OCI-LY7 (cell line): ENCODE measurements at regions of chr7 and their contacts with region 1.

Region 1: GRCh38 chr7:47581806-47582763 is at the start of gene TNS3:
- DNase-seq: peak; percentile 71
- H3K4me3 ChIP-seq: peak within 1 kb of the TSS; percentile 87
- H3K27ac ChIP-seq: peak within 1 kb of the TSS; percentile 16
- H3K4me1 ChIP-seq: peaks cover 61% of the 10 kb centered on the region
- CTCF ChIP-seq: peak; percentile 41; the same call in 1 of the 2 replicates
- total RNA-seq, gene TNS3: 8.3 and 9.5 TPM in 2 replicates

Region 2: GRCh38 chr7:47153076-47153475 is 429.0 kb before region 1 on chr7:
- CTCF ChIA-PET with region 1: no interaction called
- POLR2A ChIA-PET with region 1: no interaction called
- intact Hi-C with region 1: loop called (anchors 5 kb)
- DNase-seq: peak; percentile 69
- H3K4me3 ChIP-seq: peak overlapping the region; percentile 63
- H3K27ac ChIP-seq: peak overlapping the region; percentile 98
- H3K4me1 ChIP-seq: peaks cover 91% of the 10 kb centered on the region
- CTCF ChIP-seq: no peak

Region 3: GRCh38 chr7:47266131-47266706 is 315.9 kb before region 1 on chr7:
- CTCF ChIA-PET with region 1: no interaction called
- POLR2A ChIA-PET with region 1: no interaction called
- intact Hi-C with region 1: loop called (anchors 5 kb)
- DNase-seq: peak; percentile 67
- H3K4me3 ChIP-seq: no peak overlapping the region
- H3K27ac ChIP-seq: no peak overlapping the region
- H3K4me1 ChIP-seq: no peaks in the 10 kb centered on the region
- CTCF ChIP-seq: peak; percentile 98

Region 4: DNA sequence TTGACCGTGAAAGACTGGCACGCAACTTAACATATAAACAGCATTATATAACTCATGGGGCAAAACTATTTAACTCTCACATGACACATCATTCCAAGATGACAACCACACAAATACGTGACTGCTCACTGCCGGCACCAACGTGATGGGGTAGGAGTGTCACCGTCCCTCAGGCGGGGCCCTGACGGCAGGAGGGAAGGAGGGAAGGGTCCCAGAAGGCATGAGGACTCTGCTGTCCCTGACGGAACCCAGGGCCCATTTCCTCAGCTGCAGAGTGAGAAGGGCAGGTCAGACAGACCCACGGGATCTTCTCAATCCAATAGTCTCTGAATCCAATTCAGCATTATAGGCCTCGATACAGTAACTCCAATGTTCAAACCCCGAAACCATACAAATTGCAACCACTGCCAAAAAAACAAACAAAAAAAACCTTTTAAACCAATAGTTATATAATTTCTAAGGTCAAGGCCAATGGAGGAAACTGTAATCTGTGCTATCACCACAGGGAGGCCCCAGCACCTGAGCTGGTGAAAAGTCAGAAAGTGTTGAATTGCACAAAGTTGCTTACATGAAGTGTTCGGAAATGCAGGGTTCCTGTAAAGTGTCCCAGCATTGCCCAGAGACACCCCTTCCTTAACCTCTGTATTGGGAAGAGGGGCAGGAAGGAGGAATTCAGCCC is 137.6 kb before region 1 on chr7:
- CTCF ChIA-PET with region 1: no interaction called
- POLR2A ChIA-PET with region 1: no interaction called
- intact Hi-C with region 1: loop called (anchors 1 kb)
- DNase-seq: peak; percentile 52
- H3K4me3 ChIP-seq: no peak overlapping the region
- H3K27ac ChIP-seq: no peak overlapping the region
- H3K4me1 ChIP-seq: peaks cover 3% of the 10 kb centered on the region
- CTCF ChIP-seq: peak; percentile 83

Region 5: DNA sequence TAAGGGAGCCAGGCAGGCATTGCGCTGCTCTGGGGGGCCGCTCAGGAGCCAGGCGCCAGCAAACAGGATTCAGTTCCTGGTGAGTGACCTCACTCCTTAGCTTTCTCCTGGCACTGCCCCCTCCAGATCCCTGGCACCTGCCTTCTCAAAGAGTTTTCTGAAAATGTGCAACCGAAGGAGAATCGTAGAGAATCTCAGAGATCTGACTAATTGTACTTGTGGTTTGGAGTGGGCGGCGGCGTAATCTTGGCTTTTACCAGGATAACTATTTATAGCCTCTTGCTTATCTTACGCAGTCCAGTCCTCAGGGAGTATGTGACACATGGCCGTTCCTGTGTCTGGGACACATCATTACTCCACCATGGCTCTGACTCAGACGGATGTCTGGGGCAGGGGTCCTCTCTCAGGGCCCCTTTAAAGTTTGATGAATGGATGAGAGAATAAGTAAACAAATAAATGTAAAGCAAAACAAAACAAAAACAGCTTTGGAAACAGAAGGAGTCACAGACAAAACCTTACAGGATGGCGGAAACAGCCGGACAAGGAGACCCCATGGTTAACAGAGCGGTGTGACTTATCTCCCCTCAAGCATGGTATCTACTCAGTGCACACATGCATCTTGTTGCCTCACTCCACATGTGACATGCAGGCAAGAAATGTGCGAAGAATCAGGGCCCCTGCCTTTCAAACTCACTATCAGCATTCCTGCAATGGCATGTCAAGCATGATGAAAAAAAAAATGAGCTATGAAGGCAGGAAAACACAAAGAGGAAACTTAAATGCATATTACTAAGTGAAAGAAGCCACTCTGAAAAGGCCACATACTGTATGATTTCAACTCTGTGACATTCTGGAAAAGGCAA is 99.8 kb before region 1 on chr7:
- CTCF ChIA-PET with region 1: interaction called, 3 read pairs
- POLR2A ChIA-PET with region 1: no interaction called
- intact Hi-C with region 1: loop called (anchors 5 kb)
- DNase-seq: no peak
- H3K4me3 ChIP-seq: no peak overlapping the region
- H3K27ac ChIP-seq: no peak overlapping the region
- H3K4me1 ChIP-seq: peaks cover 33% of the 10 kb centered on the region
- CTCF ChIP-seq: no peak

Region 6: GRCh38 chr7:47714669-47715607 is 132.9 kb after region 1 on chr7:
- CTCF ChIA-PET with region 1: interaction called, 3 read pairs
- POLR2A ChIA-PET with region 1: interaction called, 4 read pairs
- intact Hi-C with region 1: loop called (anchors 2 kb)
- DNase-seq: peak; percentile 81
- H3K4me3 ChIP-seq: peak overlapping the region; percentile 41
- H3K27ac ChIP-seq: peak overlapping the region; percentile 95
- H3K4me1 ChIP-seq: peaks cover 81% of the 10 kb centered on the region
- CTCF ChIP-seq: no peak

Region 7: DNA sequence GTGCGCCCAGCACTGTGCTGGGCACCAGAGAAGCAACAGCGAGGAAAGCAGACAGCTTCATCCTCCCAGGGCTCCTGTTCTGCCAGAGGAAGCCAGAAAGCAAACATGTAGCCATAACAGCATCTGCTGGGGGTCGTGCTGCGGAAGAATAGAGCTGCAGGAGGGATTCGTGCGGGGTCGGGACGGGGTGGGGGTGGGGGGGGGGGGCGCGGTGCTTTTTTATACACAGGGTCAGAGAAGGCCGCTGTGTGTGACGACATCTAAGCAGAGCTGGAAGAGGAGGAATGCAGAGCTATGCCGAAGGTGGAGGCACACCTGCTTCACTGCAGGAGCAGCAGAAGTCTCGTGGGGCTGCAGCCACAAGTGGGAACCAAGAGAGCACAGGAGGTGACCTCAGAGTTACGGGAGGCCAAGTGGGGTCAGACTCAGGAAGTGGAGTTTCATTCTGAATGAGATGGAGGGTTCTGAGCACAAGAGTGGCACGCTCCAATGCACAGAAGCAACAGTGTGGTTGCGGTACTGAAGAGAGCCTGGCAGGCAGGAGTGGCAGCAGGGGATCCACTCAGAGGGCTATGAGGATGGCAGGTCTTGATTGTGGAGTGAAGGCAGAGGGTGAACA is 355.1 kb after region 1 on chr7:
- CTCF ChIA-PET with region 1: interaction called, 4 read pairs
- POLR2A ChIA-PET with region 1: no interaction called
- intact Hi-C with region 1: loop called (anchors 5 kb)
- DNase-seq: peak; percentile 83
- H3K4me3 ChIP-seq: peak overlapping the region; percentile 42
- H3K27ac ChIP-seq: peak overlapping the region; percentile 80
- H3K4me1 ChIP-seq: peaks cover 38% of the 10 kb centered on the region
- CTCF ChIP-seq: no peak

Region 8: DNA sequence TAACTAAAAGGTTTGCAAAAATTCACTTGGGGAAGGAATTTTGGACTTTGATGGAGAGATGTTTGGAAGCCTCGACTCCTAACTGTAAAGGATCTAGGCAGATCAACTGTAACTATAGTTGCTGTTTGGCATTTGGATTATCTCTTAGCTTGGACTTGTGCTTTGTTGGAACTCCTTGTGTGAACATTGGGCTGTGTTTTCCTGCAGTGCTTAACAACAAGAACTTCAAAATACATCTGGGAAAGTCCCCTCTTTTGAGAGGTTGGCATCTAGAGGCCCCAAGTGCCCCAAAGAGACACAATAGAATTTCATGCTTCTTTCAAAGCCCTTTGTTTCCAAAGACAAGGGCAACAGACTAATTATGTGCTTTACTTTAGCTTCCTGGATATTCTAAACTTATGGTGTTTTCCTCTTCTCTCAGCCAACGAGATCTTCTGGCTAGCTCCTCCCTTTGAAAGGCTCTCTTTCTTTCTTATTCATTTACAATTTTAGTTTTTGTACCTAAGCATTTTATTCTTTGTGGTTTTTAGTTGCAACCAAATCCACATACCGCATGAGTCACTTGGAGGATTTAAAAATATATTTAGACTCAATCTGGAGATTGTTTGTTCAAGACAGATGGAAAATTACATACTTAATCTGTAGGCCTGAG is 600.8 kb after region 1 on chr7:
- CTCF ChIA-PET with region 1: no interaction called
- POLR2A ChIA-PET with region 1: no interaction called
- intact Hi-C with region 1: no loop called
- DNase-seq: no peak
- H3K4me3 ChIP-seq: no peak overlapping the region
- H3K27ac ChIP-seq: no peak overlapping the region
- H3K4me1 ChIP-seq: no peaks in the 10 kb centered on the region
- CTCF ChIP-seq: no peak